Activated B cell treated with CpG ODN at 0.5 μM for 24 hours (primary cell): ENCODE measurements at regions of chr17 and their contacts with region 1.

Region 1: DNA sequence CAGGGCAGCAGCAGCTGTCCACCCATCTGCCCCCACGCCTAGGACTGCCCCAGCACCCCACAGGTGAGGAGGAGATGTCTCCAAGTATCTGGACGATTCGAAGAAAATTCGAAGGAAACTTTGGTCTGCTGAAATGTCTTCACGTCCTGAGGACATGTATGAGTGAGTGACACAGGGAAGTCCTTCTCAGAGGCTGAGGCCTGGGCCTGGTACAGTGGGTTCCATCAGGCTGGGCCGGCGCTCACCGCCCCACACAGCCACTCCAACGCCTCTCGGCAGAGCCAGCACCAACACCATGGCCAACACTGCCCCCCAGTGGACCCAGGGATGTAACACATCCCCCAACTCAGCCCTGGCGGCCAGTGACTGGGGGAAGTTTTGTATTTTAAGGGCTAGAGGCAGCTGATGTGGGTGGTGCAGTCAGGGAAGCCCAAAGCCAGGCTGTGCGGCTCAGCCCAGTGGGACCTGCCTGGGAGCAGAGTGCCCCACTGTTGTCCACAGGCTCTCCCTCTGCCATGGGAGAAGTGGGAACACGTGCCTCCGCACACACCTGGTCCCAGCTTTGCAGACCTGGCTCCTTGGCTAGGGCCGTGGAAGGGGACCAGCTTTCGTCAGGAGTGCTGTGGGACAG is 55.8 kb upstream of the FASN start:
- DNase-seq: peak; percentile 71
- ATAC-seq: peak; percentile 100
- H3K4me3 Mint-ChIP-seq: no peak overlapping the region
- H3K27ac Mint-ChIP-seq: no peak overlapping the region
- H3K4me1 Mint-ChIP-seq: no peaks in the 10 kb centered on the region
- H3K27me3 Mint-ChIP-seq: no peaks in the 10 kb centered on the region
- CTCF ChIP-seq: no peak

Region 2: DNA sequence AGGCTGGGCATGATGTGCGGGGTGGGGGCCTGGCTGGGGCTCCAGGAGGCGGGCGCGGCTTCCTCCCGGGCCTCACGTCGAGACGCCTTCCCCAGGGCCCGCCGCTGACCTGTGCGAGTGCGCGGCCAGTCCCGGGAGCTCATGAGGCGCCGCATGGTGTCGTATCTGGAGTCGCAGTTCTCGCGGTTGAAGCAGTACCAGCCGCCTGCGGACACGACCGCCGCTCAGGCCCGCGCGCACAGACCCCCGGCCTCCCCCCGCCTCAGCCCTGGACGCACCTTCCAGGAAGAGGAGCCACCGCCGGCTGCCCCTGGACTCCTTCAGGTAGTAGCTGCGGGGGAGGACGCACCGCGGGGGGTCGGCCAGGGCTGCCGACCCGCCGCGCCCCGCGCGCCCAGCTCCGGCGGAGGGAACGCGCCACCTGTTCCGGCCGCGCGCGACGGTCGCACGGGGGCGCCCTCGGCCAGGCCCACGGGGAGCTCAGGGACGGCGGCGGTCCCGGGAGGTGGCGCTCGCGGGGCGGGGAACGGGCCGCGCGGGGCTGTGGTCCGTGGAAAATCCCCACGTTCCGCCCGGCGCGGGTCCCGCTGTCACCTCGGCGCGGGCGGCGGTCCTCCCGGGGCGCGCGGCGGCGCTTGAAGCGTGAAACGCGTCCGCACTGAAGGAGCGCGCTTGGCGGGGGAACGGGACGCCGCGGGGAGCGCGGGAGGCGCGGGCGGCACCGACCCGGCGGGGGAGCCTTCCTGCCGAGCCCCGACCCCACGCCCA is 194.3 kb before region 1 on chr17:
- CTCF ChIA-PET with region 1: interaction called, 16 read pairs
- POLR2A ChIA-PET with region 1: no interaction called
- intact Hi-C with region 1: loop called (anchors 1 kb)
- DNase-seq: peak; percentile 90
- ATAC-seq: peak; percentile 95
- H3K4me3 Mint-ChIP-seq: no peak overlapping the region
- H3K27ac Mint-ChIP-seq: no peak overlapping the region
- H3K4me1 Mint-ChIP-seq: peaks cover 4% of the 10 kb centered on the region
- H3K27me3 Mint-ChIP-seq: peaks cover 25% of the 10 kb centered on the region
- CTCF ChIP-seq: peak; percentile 20

Region 3: GRCh38 chr17:82030470-82031302 is 123.2 kb before region 1 on chr17:
- CTCF ChIA-PET with region 1: interaction called, 15 read pairs
- POLR2A ChIA-PET with region 1: no interaction called
- intact Hi-C with region 1: no loop called
- DNase-seq: peak; percentile 69
- ATAC-seq: peak; percentile 84
- H3K4me3 Mint-ChIP-seq: peak overlapping the region; percentile 77
- H3K27ac Mint-ChIP-seq: no peak overlapping the region
- H3K4me1 Mint-ChIP-seq: peaks cover 14% of the 10 kb centered on the region
- H3K27me3 Mint-ChIP-seq: peaks cover 2% of the 10 kb centered on the region
- CTCF ChIP-seq: peak; percentile 73

Region 4: DNA sequence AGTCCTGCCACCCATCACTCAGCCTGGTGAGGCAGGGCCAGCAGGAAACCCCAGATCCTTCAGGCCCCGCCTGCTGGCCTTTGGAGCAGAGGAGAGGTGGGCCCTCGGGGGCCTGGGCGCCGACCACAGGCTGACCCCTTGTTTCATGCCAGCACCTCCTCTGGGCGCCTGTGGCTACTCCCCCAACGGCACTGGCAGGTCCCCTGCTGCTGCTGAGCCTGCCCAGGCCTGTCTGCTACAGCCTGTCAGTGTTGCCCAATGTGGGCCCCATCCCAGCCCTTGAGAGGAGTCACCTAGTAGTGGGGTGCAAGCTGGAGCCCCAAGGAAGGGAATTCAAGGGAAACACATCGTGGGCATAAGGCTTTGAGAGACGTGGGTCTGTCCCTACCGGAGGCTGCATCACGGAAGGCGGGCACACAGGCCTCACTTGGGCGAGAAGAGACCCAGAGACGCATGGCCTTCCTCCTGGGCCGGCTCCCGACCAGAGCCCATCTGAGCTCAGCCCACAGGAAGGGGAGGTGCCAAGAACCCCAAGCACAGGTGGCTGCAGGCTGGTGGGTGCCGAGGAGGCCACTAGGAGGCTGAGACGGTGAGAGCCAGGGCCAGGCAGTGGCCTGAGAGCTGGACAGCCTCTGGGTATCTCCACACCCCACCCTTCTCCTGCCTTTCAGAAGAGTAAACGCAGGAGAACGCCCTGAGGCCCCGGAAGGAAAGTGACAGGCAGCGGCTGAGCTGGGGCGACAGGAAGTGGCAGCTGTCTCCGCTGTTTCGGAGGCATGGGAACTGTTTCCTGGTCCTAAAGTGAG is 47.8 kb before region 1 on chr17:
- CTCF ChIA-PET with region 1: no interaction called
- POLR2A ChIA-PET with region 1: no interaction called
- intact Hi-C with region 1: loop called (anchors 5 kb)
- DNase-seq: peak; percentile 53
- ATAC-seq: peak; percentile 97
- H3K4me3 Mint-ChIP-seq: peak overlapping the region; percentile 88
- H3K27ac Mint-ChIP-seq: peak overlapping the region; percentile 94
- H3K4me1 Mint-ChIP-seq: peaks cover 32% of the 10 kb centered on the region
- H3K27me3 Mint-ChIP-seq: no peaks in the 10 kb centered on the region
- CTCF ChIP-seq: no peak

Region 5: DNA sequence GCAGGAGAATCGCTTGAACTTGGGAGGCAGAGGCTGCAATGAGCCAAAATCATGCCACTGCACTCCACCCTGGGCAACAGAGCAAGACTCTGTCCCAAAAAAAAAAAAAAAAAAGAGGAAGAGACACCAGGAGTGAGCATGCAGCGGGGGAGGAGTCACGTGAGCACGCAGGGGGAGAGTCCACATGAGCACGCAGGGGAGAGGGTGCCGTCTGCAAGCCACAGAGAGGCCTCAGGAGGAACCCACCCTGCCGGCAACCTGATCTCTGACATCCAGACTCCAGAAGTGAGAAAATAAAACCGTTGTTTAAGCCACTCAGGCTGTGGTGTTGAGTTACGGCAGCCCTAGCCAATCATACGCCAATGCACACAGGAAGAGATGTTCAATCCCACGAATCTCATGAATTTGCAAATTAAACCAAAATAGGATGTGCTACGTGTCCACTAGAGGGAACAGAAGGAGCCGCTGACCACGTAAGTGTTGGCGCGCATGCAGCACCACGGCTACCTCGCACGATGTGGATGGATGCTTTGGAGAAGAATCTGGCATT is 16.6 kb after region 1 on chr17:
- CTCF ChIA-PET with region 1: no interaction called
- POLR2A ChIA-PET with region 1: no interaction called
- intact Hi-C with region 1: no loop called
- DNase-seq: no peak
- ATAC-seq: no peak
- H3K4me3 Mint-ChIP-seq: no peak overlapping the region
- H3K27ac Mint-ChIP-seq: no peak overlapping the region
- H3K4me1 Mint-ChIP-seq: no peaks in the 10 kb centered on the region
- H3K27me3 Mint-ChIP-seq: no peaks in the 10 kb centered on the region
- CTCF ChIP-seq: no peak